GM12878 (cell line): ENCODE measurements at regions of chr7 and their contacts with region 1.

Region 1: DNA sequence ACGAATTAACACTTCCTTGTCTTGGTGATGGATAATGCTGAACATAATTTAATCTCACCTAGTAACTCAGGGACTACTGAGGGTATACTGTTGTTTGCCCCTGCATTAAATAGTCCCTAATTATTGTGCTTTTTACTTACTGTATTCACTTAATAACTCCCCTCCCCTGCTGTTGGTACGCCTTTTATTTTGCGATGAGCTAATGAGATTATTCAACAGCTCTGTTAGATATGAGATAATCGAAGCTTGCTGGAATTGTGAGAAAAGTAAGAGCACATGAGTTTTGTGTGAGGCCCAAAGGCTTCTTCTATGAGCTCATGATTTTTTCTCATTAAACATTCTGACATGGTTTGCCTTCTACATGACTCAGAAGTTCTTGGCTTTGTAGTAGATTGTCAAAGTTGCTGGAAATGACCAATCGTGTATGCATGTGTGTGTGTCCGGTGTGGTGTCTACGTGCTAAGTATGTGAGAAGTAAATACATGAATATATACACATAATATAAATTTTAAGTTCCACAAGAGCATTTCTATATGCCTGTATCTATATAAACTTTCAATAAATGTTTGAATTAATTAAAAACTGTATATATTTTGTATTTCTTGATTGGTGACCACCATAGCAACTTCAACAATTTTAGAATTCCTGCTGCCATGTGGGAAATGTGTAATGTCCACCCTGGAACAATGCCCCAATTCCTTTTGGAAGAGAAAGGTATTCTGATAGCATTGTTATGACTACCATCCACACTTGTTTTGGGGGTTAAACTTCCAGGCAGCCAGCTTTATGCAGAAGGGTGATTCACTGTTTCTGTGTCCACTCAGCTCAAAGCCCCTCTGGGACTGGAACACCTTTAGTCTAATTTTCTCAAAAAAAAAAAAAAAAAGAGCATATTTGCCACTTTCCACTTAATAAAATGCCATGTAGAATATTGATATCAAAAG is 106.2 kb downstream of the SAMD9 start:
- DNase-seq: no peak
- ATAC-seq: no peak
- H3K4me3 ChIP-seq: no peak overlapping the region
- H3K27ac ChIP-seq: no peak overlapping the region
- H3K4me1 ChIP-seq: no peaks in the 10 kb centered on the region
- H3K27me3 ChIP-seq: no peaks in the 10 kb centered on the region
- CTCF ChIP-seq: no peak
- EP300 ChIP-seq: no peak
- POLR2A ChIP-seq: no peak
- RAD21 ChIP-seq: no peak

Region 2: GRCh38 chr7:92982928-92983327 is 28.7 kb before region 1 on chr7:
- CTCF ChIA-PET with region 1: no interaction called
- POLR2A ChIA-PET with region 1: interaction called, 10 read pairs
- RAD21 ChIA-PET with region 1: no interaction called
- SMC1A ChIA-PET with region 1: no interaction called
- in situ Hi-C with region 1: no loop called
- intact Hi-C with region 1: no loop called
- DNase-seq: no peak
- ATAC-seq: no peak
- H3K4me3 ChIP-seq: no peak overlapping the region
- H3K27ac ChIP-seq: no peak overlapping the region
- H3K4me1 ChIP-seq: no peaks in the 10 kb centered on the region
- H3K27me3 ChIP-seq: no peaks in the 10 kb centered on the region
- CTCF ChIP-seq: no peak
- EP300 ChIP-seq: no peak
- POLR2A ChIP-seq: no peak
- RAD21 ChIP-seq: no peak